T-cell (primary cell): ENCODE measurements at regions of chr12 and their contacts with region 1.

Region 1: GRCh38 chr12:86456241-86456640 is 200.1 kb upstream of the MGAT4C start:
- DNase-seq: no peak
- ATAC-seq: no peak
- H3K4me3 ChIP-seq: no peak overlapping the region
- H3K4me3 Mint-ChIP-seq: no peak overlapping the region
- H3K27ac ChIP-seq: no peak overlapping the region
- H3K27ac Mint-ChIP-seq: no peak overlapping the region
- H3K4me1 ChIP-seq: no peaks in the 10 kb centered on the region
- H3K4me1 Mint-ChIP-seq: no peaks in the 10 kb centered on the region
- H3K27me3 ChIP-seq: no peaks in the 10 kb centered on the region
- H3K27me3 Mint-ChIP-seq: no peaks in the 10 kb centered on the region

Region 2: DNA sequence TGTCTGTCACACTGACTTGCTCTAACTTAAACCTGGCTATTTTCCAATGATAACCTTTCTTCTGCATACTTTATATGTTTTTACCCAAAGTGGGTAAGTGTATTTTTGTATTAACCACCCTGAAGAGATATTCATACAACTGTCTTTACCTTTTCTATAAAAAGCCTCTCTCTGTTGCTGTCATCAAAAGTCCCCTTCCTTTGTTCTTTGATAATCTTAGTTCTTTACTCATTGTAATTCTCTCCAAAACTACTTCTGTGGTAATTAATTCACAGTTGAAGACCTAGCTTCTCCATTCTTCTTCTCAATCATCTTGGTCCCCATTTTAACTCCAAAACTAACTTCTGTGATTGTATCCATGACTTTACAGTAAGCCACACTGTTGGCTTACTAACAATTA is 279.6 kb after region 1 on chr12:
- CTCF ChIA-PET with region 1: interaction called in 1 of 2 experiments, 10 read pairs
- POLR2A ChIA-PET with region 1: no interaction called
- DNase-seq: no peak
- ATAC-seq: no peak
- H3K4me3 ChIP-seq: no peak overlapping the region
- H3K4me3 Mint-ChIP-seq: no peak overlapping the region
- H3K27ac ChIP-seq: no peak overlapping the region
- H3K27ac Mint-ChIP-seq: no peak overlapping the region
- H3K4me1 ChIP-seq: no peaks in the 10 kb centered on the region
- H3K4me1 Mint-ChIP-seq: no peaks in the 10 kb centered on the region
- H3K27me3 ChIP-seq: no peaks in the 10 kb centered on the region
- H3K27me3 Mint-ChIP-seq: no peaks in the 10 kb centered on the region